ENCODE measurements at regions of chr3 and their contacts with region 1.

Region 1: GRCh38 chr3:40191850-40192448 is 117.6 kb upstream of the EIF1B start:
- DNase-seq: peak; percentile 32
- H3K4me3 ChIP-seq: no peak overlapping the region
- H3K27ac ChIP-seq: no peak overlapping the region
- H3K4me1 ChIP-seq: no peaks in the 10 kb centered on the region
- H3K27me3 ChIP-seq: no peaks in the 10 kb centered on the region
- CTCF ChIP-seq: peak; percentile 60

Region 2: GRCh38 chr3:39651993-39652739 is 539.8 kb before region 1 on chr3:
- CTCF ChIA-PET with region 1: no interaction called
- POLR2A ChIA-PET with region 1: no interaction called
- intact Hi-C with region 1: no loop called
- DNase-seq: no peak
- H3K4me3 ChIP-seq: no peak overlapping the region
- H3K27ac ChIP-seq: no peak overlapping the region
- H3K4me1 ChIP-seq: no peaks in the 10 kb centered on the region
- H3K27me3 ChIP-seq: no peaks in the 10 kb centered on the region
- CTCF ChIP-seq: no peak

Region 3: DNA sequence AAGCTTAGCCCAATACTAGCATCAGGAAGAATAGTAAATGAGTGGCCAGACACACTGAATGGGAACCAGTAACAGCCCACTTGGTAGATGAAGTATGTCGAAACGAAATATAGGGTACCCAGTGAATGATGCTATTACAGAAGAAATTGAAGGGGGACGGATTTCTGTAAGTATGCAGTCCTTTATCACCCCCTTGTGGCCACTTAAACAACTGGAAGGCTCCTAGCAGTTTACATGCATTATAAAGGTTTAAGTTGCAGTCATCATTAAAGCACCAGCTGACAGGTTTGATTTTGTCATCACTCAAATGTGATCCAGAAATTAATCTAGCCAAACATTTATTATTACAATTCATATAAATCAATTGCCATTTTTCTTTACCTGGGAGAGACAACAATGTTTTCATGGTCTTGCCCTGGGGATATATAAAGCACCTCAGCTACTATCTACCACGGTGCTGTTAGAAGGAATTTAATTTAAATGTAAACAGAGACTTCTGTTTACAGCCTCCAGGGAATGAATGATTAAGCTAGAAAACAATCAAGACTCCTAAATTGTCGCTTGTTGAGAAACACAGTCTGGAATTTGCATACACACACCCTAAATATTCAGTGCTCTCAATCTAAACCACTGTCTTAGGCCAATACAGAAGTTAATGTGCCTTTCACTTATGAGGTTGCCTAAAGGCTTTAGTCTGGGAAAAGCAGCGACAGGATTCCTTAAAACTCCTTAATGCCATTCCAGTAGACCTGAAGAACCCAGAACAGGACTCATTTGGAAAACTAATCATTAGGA is 125.3 kb after region 1 on chr3:
- CTCF ChIA-PET with region 1: no interaction called
- POLR2A ChIA-PET with region 1: no interaction called
- intact Hi-C with region 1: loop called (anchors 1 kb)
- DNase-seq: peak; percentile 58
- H3K4me3 ChIP-seq: no peak overlapping the region
- H3K27ac ChIP-seq: no peak overlapping the region
- H3K4me1 ChIP-seq: peaks cover 17% of the 10 kb centered on the region
- H3K27me3 ChIP-seq: no peaks in the 10 kb centered on the region
- CTCF ChIP-seq: peak; percentile 61

Region 4: GRCh38 chr3:40608091-40608490 is 416.1 kb after region 1 on chr3:
- CTCF ChIA-PET with region 1: no interaction called
- POLR2A ChIA-PET with region 1: no interaction called
- intact Hi-C with region 1: no loop called
- DNase-seq: no peak
- H3K4me3 ChIP-seq: no peak overlapping the region
- H3K27ac ChIP-seq: no peak overlapping the region
- H3K4me1 ChIP-seq: no peaks in the 10 kb centered on the region
- H3K27me3 ChIP-seq: no peaks in the 10 kb centered on the region
- CTCF ChIP-seq: no peak